ENCODE measurements at regions of chr7 and their contacts with region 1.

Region 1: GRCh38 chr7:137606061-137606674 is 240.6 kb downstream of the DGKI start:
- DNase-seq: no peak
- H3K4me3 ChIP-seq: no peak overlapping the region
- H3K27ac ChIP-seq: no peak overlapping the region
- H3K4me1 ChIP-seq: no peaks in the 10 kb centered on the region
- H3K27me3 ChIP-seq: no peaks in the 10 kb centered on the region
- CTCF ChIP-seq: peak in 2 of 3 experiments; percentile 40 to 62

Region 2: GRCh38 chr7:137626469-137627067 is 20.4 kb after region 1 on chr7:
- intact Hi-C with region 1: loop called (anchors 2 kb)
- DNase-seq: no peak
- H3K4me3 ChIP-seq: no peak overlapping the region
- H3K27ac ChIP-seq: no peak overlapping the region
- H3K4me1 ChIP-seq: no peaks in the 10 kb centered on the region
- H3K27me3 ChIP-seq: no peaks in the 10 kb centered on the region
- CTCF ChIP-seq: peak in 2 of 3 experiments; percentile 51 to 71

Region 3: DNA sequence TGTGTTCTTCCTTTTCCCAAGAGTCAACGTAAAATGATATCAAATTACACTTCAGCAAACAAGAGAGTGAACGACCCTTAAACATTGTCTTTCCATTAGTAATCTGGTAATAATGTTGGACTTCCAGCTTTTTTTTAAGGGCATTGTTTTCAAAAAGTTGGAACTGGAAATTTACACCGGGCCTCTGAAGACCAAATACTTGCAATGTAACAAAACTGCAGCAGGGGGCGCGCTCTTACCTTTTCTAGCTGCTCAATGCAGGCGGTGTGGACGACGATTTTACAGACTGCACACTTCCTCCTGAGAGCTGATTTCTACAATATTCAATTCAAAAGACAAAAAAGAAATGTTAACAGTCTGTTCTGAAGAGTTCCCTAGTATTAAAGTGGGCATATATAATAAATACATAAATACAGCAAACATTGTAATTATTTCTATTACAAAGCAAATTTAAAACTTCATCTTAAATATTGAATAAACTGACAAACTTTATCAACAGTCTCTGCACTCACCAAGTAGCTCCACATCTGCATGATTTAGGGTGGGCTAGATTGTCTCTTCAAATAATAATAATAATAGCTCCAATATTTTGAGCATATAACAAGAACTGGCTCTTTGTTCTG is 50.2 kb after region 1 on chr7:
- intact Hi-C with region 1: no loop called
- DNase-seq: peak in 1 of 2 donors; percentile 90
- H3K4me3 ChIP-seq: no peak overlapping the region
- H3K27ac ChIP-seq: peak overlapping the region; percentile 47 to 60
- H3K4me1 ChIP-seq: peaks cover 5 to 9% of the 10 kb centered on the region in 2 donors
- H3K27me3 ChIP-seq: no peaks in the 10 kb centered on the region
- CTCF ChIP-seq: peak; percentile 57 to 89 (median 88)

Region 4: GRCh38 chr7:137717811-137718271 is 111.7 kb after region 1 on chr7:
- intact Hi-C with region 1: no loop called
- DNase-seq: peak in 1 of 2 donors; percentile 65
- H3K4me3 ChIP-seq: peak overlapping the region in 1 of 2 donors; percentile 15
- H3K27ac ChIP-seq: peak overlapping the region; percentile 6 to 34
- H3K4me1 ChIP-seq: peaks cover 0 to 12% of the 10 kb centered on the region in 2 donors
- H3K27me3 ChIP-seq: no peaks in the 10 kb centered on the region
- CTCF ChIP-seq: no peak

Region 5: DNA sequence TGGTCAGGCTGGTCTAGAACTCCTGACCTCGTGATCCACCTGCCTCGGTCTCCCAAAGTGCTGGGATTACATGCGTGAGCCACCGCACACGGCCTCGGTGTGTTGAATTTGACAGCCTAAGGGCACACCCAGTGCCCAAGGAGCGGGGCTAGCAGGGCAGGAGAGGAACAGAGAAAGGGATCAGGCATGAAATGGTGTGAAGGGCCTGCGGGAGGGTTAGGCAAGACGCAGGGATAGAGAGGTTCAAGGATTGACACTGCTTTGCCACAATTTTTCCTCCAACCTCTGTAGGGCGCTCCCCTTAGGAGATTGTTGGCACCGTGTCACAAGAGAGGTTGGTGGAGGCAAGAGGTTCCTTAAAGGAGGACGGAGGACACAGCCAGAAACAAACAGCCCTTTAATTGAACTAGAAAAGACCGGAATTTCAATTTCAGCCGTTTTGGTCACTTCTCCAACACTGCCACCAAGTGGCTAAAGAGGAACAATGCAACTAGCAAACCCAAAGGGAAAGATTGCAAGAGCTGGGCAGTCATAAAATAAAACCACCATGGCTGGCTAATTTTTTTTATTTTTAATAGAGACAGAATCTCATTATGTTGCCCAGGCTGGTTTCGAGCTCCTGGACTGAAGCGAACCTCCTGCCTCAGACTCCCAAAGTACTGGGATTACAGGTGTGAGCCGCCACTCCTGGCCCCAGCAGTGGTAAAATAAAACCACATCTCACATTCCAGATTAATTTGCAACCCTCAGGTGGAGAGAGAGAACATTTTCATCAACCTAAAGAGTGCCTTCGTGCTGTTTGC is 402.6 kb after region 1 on chr7:
- intact Hi-C with region 1: loop called (anchors 2 kb)
- DNase-seq: no peak
- H3K4me3 ChIP-seq: no peak overlapping the region
- H3K27ac ChIP-seq: no peak overlapping the region
- H3K4me1 ChIP-seq: no peaks in the 10 kb centered on the region
- H3K27me3 ChIP-seq: no peaks in the 10 kb centered on the region
- CTCF ChIP-seq: peak; percentile 80 to 92 (median 90)